ENCODE measurements at regions of chr1 and their contacts with region 1.

Region 1: DNA sequence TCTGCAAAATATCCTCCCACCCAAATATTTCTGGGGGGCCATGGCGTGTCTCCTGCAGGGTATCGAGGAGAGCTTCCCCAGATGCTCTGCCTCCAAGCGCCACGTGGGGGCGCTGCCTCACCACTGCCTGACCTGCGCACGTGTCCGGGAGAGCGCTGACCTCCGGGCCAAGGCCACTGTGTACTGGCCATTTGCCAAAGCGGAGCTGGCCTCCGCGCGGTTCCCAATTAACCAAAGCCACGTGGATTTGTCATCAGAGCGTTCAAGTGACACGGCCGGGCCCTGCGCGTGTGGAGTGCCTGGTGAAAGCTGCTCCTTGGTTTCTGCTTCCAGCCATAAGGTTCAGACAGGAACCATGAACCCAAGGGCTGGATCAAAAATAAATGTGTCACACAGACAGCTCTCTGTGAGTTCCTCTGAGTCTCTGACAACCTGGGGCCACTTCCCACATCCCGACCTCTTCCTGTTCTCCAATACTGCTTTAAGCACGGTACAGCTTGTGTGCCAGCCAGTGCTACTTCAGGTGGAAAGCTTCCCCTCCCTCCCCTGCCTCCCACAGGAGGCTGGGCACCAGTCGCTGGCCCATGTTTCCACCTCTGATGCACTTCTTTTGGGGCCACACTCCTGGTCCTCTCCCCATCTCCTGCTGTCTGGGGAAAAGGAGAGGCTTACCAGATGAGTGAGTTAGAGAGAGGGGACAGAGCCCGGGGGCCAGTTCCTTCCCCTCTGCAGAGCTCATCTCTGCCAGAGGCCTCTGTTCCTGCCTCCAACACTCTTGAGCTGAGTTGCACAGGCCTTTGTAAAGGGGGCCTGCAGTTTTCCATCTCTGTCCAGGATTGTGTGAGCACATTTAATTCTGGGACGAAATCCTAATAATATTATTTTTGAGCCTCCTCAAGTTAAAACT is 26.1 kb downstream of the ZP4 start:
- DNase-seq: peak; percentile 31
- H3K4me3 ChIP-seq: peak overlapping the region in 1 of 3 experiments; percentile 16
- H3K27ac ChIP-seq: no peak overlapping the region
- H3K4me1 ChIP-seq: peaks cover 6% of the 10 kb centered on the region
- H3K27me3 ChIP-seq: no peaks in the 10 kb centered on the region
- CTCF ChIP-seq: peak; percentile 91 to 100

Region 2: DNA sequence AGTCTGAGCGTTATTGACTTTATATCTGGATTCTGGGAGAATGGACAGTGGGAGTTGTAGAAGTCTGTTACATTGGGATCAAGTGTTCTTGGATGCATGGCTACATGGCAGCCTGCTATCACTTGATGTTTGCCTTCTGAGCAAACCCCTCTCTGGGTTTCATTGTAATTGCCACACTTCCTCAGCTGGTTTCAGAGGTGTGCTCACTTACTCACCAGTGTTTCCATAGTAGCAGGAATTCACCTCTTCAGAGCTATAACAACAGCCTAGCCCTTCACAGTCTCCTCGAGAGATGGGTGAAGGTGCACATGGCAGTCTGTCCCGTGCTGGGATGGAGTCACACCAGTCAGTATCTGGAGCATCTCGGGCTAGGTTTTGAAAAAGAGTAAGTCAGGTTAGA is 23.6 kb after region 1 on chr1:
- CTCF ChIA-PET with region 1: interaction called, 3 read pairs
- dilution Hi-C with region 1: no loop called
- in situ Hi-C with region 1: no loop called
- intact Hi-C with region 1: loop called (anchors 2 kb)
- DNase-seq: peak; percentile 90
- H3K4me3 ChIP-seq: no peak overlapping the region
- H3K27ac ChIP-seq: peak overlapping the region; percentile 45
- H3K4me1 ChIP-seq: peaks cover 30% of the 10 kb centered on the region
- H3K27me3 ChIP-seq: no peaks in the 10 kb centered on the region
- CTCF ChIP-seq: no peak

Region 3: DNA sequence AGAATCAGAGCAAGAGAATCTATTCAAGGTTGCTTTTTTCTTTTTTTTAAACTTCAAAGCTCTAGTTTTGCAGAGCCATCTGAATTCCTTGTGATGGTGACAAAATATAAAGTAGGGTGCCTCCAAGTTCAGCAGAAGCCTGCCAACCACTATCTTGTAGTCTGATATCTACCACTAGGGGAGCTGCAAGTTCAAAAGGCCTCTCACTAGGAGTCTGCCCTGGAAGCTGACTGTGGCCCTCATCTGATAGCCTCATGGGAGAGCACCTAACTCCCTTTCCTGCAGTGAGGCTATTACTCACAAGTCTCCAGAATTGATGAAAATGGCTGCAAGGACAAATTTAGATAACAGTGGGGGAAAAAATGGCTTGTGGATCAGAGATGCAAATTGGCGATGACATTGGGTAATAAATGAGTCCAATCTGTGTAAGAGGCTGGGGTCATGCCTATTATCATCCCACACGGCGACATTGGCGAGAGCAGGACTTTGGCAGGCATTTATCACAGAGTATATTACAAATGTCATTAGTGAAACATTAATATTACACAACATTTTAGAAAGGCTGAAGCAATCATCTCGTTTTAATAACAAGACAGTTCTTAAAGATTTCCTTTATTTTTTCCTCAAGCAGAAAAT is 36.8 kb after region 1 on chr1:
- CTCF ChIA-PET with region 1: no interaction called
- dilution Hi-C with region 1: no loop called
- in situ Hi-C with region 1: no loop called
- intact Hi-C with region 1: no loop called
- DNase-seq: peak; percentile 48
- H3K4me3 ChIP-seq: no peak overlapping the region
- H3K27ac ChIP-seq: no peak overlapping the region
- H3K4me1 ChIP-seq: no peaks in the 10 kb centered on the region
- H3K27me3 ChIP-seq: no peaks in the 10 kb centered on the region
- CTCF ChIP-seq: peak; percentile 68 to 72

Region 4: GRCh38 chr1:237953238-237953637 is 88.6 kb after region 1 on chr1:
- CTCF ChIA-PET with region 1: interaction called, 3 read pairs
- dilution Hi-C with region 1: no loop called
- in situ Hi-C with region 1: no loop called
- intact Hi-C with region 1: loop called (anchors 1 kb)
- DNase-seq: peak; percentile 43
- H3K4me3 ChIP-seq: no peak overlapping the region
- H3K27ac ChIP-seq: no peak overlapping the region
- H3K4me1 ChIP-seq: no peaks in the 10 kb centered on the region
- H3K27me3 ChIP-seq: no peaks in the 10 kb centered on the region
- CTCF ChIP-seq: peak; percentile 35 to 81

Region 5: GRCh38 chr1:238005116-238005515 is 140.5 kb after region 1 on chr1:
- CTCF ChIA-PET with region 1: no interaction called
- dilution Hi-C with region 1: no loop called
- in situ Hi-C with region 1: no loop called
- intact Hi-C with region 1: no loop called
- DNase-seq: no peak
- H3K4me3 ChIP-seq: no peak overlapping the region
- H3K27ac ChIP-seq: no peak overlapping the region
- H3K4me1 ChIP-seq: no peaks in the 10 kb centered on the region
- H3K27me3 ChIP-seq: no peaks in the 10 kb centered on the region
- CTCF ChIP-seq: no peak

Region 6: DNA sequence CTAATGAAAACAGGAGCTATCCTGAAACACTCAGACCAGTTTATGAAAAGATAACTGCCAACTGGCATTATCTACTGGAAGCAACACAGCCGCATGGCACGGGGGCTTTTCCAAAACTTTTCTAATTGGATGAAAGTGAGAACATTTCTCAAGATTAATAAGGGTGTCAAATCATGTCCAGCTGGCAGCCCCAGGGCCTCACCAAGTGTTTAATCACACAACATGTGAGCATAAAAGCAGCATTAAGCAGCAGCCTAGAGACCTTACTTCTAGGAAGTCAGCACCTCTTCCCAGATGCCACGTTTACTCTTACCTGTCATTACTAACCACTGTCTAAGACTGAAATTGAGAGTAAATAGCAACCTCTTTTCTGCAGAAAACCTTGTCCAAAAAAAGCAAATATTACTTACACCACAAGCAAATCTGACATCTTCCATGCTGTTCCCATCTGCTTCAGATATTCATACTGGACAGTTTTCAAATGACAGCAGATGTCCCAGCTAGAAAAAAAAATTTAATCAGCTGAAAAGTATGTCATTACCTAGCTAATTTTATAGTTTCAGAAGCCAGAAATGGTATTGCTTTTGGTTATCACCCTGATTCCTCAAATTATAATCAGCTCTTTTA is 367.6 kb after region 1 on chr1:
- CTCF ChIA-PET with region 1: no interaction called
- dilution Hi-C with region 1: loop called (anchors 10 kb)
- in situ Hi-C with region 1: loop called in 1 of 2 experiments (anchors 25 kb)
- intact Hi-C with region 1: loop called (anchors 1 kb)
- DNase-seq: no peak
- H3K4me3 ChIP-seq: no peak overlapping the region
- H3K27ac ChIP-seq: no peak overlapping the region
- H3K4me1 ChIP-seq: no peaks in the 10 kb centered on the region
- H3K27me3 ChIP-seq: no peaks in the 10 kb centered on the region
- CTCF ChIP-seq: no peak

Region 7: DNA sequence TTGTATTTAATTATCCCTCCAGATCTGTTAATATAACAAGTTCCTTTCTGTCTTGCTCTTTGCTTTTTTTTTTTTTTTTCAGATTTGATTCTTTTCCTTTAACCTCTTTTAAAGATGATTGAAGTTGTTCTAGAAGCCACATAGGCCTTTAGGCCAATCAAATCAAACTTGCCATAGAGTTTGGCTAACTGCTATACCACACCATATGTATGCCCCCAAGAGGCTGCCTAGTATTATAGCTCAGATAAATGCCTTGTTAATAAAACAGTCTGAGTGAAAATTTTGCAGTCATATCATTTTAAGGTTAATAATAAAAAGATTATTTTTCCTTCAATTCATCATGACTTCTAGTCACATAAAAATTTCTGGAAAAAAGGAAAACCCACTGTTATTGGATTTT is 825.8 kb after region 1 on chr1:
- CTCF ChIA-PET with region 1: no interaction called
- dilution Hi-C with region 1: no loop called
- in situ Hi-C with region 1: no loop called
- intact Hi-C with region 1: loop called (anchors 1 kb)
- DNase-seq: peak; percentile 9
- H3K4me3 ChIP-seq: no peak overlapping the region
- H3K27ac ChIP-seq: no peak overlapping the region
- H3K4me1 ChIP-seq: no peaks in the 10 kb centered on the region
- H3K27me3 ChIP-seq: no peaks in the 10 kb centered on the region
- CTCF ChIP-seq: peak; percentile 11 to 39